B cell (primary cell): ENCODE measurements at regions of chr17 and their contacts with region 1.

Region 1: GRCh38 chr17:10033959-10034358 is 128.9 kb upstream of the RCVRN start:
- DNase-seq: peak; percentile 34
- ATAC-seq: peak; percentile 48
- H3K4me3 ChIP-seq: peak overlapping the region in 2 of 5 experiments; percentile 26 to 41
- H3K4me3 Mint-ChIP-seq: peak overlapping the region; percentile 67
- H3K27ac ChIP-seq: peak overlapping the region; percentile 7 to 38
- H3K27ac Mint-ChIP-seq: peak overlapping the region; percentile 74
- H3K4me1 ChIP-seq: peaks cover 14 to 28% of the 10 kb centered on the region in 2 donors
- H3K4me1 Mint-ChIP-seq: peaks cover 26% of the 10 kb centered on the region
- H3K27me3 ChIP-seq: peaks cover 0 to 6% (median 0%) of the 10 kb centered on the region in 4 experiments
- H3K27me3 Mint-ChIP-seq: no peaks in the 10 kb centered on the region
- CTCF ChIP-seq: no peak

Region 2: GRCh38 chr17:10018461-10018891 is 15.5 kb before region 1 on chr17:
- CTCF ChIA-PET with region 1: interaction called, 5 read pairs
- POLR2A ChIA-PET with region 1: interaction called, 9 read pairs
- intact Hi-C with region 1: loop called (anchors 1 kb)
- DNase-seq: peak; percentile 74
- ATAC-seq: peak; percentile 78
- H3K4me3 ChIP-seq: peak overlapping the region in 1 of 5 experiments; percentile 42
- H3K4me3 Mint-ChIP-seq: peak overlapping the region; percentile 66
- H3K27ac ChIP-seq: peak overlapping the region; percentile 58 to 61
- H3K27ac Mint-ChIP-seq: peak overlapping the region; percentile 17
- H3K4me1 ChIP-seq: peaks cover 30 to 52% of the 10 kb centered on the region in 2 donors
- H3K4me1 Mint-ChIP-seq: peaks cover 47% of the 10 kb centered on the region
- H3K27me3 ChIP-seq: no peaks in the 10 kb centered on the region
- H3K27me3 Mint-ChIP-seq: no peaks in the 10 kb centered on the region
- CTCF ChIP-seq: no peak